Mammary epithelial cell (primary cell): ENCODE measurements at regions of chr22 and their contacts with region 1.

Region 1: DNA sequence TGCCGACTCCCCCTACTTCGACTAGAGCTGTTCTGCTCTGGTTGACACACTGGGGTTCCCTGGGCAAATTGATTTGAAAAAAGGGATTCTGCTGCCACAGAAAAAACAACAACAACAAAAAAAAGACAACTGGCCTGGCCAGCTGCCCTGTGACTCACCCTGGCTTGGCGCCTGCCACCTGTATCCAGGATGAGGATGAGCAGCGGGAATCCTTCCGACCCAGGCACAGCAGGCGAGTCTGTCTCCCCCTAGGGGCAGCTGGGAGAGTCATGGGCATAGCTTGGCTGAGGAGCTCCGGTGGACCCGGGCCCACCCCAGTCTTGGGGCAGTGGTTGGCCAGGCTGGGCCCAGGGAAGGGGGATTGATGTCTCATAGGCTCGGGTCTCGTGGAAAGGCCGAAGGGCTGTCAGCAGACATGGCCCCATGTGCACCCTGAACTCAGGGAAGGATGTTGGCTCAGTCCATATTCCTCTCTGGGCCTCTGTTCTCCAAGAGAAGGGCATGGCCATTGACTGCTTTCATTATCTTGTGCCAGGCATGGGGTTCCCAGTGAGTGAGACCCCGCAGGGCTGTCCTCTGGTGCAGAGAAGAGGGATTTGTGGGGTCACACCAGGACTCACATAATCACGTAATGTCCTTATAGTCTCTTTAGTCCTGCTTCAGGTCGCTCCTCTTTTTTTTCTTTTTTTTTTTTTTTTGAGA is 10.4 kb upstream of the SUN2 start:
- DNase-seq: peak; percentile 65
- H3K4me3 ChIP-seq: no peak overlapping the region
- H3K27ac ChIP-seq: no peak overlapping the region
- H3K4me1 ChIP-seq: peaks cover 13% of the 10 kb centered on the region
- H3K27me3 ChIP-seq: no peaks in the 10 kb centered on the region
- CTCF ChIP-seq: peak; percentile 96 to 98

Region 2: DNA sequence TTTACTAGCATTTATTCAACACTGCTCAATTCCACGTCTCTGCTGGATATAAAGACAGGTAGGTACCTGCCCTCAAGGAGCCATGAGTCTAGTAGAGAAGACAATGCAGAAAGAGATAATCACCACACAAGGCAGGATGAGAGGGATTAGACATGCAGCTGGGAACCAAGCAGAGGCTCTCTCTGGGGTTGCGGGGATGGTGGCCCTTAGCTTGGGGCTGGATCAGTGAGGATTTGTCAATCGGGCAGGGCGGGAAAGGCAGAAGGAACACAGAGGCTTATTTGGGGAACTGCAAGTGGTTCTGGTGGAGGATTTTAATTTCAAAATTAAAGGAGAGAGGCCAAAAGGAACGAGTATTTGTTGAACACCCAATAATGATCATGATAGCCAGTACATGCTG is 187.7 kb before region 1 on chr22:
- CTCF ChIA-PET with region 1: no interaction called
- dilution Hi-C with region 1: no loop called
- in situ Hi-C with region 1: no loop called
- intact Hi-C with region 1: no loop called
- DNase-seq: no peak
- H3K4me3 ChIP-seq: no peak overlapping the region
- H3K27ac ChIP-seq: no peak overlapping the region
- H3K4me1 ChIP-seq: no peaks in the 10 kb centered on the region
- H3K27me3 ChIP-seq: no peaks in the 10 kb centered on the region
- CTCF ChIP-seq: no peak

Region 3: GRCh38 chr22:38681784-38682335 is 84.4 kb before region 1 on chr22 and contains the start of gene TOMM22:
- CTCF ChIA-PET with region 1: interaction called, 7 read pairs
- dilution Hi-C with region 1: no loop called
- in situ Hi-C with region 1: no loop called
- intact Hi-C with region 1: loop called (anchors 1 kb)
- DNase-seq: peak; percentile 85
- H3K4me3 ChIP-seq: peak within 1 kb of the TSS; percentile 68 to 95 (median 93)
- H3K27ac ChIP-seq: peak within 1 kb of the TSS; percentile 88
- H3K4me1 ChIP-seq: peaks cover 8% of the 10 kb centered on the region
- H3K27me3 ChIP-seq: no peaks in the 10 kb centered on the region
- CTCF ChIP-seq: peak; percentile 36 to 76
- total RNA-seq, gene TOMM22: 56.5 to 76.7 TPM

Region 4: DNA sequence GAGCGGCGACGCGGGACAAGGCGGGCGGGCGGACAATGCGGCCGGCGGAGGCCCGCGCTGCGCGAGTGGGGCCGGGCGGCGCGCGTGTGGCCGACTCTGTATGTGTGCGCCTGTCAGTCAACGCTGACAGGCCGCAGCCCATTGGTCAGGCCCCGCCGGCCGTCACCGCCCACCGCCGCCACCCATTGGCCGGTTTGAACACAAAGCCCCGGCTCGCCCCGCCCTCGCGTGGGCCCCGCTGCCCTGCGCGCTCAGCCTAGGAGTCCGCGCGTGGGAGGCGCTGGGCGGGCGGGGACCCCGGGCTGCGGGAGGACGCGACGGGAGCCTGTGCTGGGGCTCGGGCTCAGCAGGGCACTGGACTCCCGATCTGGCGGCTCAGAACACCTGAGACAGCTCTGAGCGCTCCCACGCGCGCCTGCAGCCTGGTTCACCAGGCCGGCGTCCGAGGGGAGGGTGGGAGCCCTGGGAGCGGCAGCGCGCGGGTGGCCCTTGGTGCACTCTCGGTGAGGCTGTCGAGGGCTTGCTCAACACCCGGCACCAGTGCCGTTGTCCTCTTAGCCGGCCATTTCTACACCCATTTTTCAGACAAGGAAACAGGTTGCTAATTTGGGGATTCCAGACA is 10.2 kb before region 1 on chr22 and contains the start of gene SUN2:
- CTCF ChIA-PET with region 1: interaction called, 10 read pairs
- dilution Hi-C with region 1: no loop called
- in situ Hi-C with region 1: no loop called
- intact Hi-C with region 1: loop called (anchors 1 kb)
- DNase-seq: peak; percentile 74
- H3K4me3 ChIP-seq: peak within 1 kb of the TSS; percentile 45 to 70 (median 55)
- H3K27ac ChIP-seq: peak within 1 kb of the TSS; percentile 37
- H3K4me1 ChIP-seq: peaks cover 35% of the 10 kb centered on the region
- H3K27me3 ChIP-seq: no peaks in the 10 kb centered on the region
- CTCF ChIP-seq: no peak
- total RNA-seq, gene SUN2: 70.3 to 106 TPM

Region 5: DNA sequence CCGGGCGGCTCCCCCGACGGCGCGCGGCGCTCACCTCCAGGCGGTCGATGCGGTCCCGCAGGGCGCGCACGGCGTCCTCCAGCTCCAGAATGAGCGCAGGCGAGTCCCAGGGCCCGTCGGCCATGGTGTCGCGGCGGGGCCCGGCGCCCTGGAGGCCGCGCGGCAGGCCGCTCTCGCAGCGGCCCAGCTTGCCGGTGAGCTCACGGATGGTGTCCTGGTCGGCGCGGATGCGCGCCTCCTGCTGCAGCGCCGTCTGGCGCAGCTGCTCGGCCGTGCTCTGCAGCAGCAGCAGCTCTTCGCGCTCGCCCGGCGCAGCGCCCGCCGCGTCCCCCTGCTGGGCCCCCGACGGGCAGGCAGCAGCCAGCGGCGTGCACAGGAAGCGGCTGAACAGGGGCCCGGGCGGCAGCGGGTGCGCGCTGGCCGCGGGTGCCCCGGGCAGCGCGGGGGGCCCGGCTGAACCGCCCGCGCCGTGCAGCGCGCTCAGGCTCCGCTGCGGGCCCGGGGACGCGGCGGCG is 77.0 kb after region 1 on chr22:
- CTCF ChIA-PET with region 1: interaction called, 15 read pairs
- dilution Hi-C with region 1: no loop called
- in situ Hi-C with region 1: no loop called
- intact Hi-C with region 1: loop called (anchors 2 kb)
- DNase-seq: peak; percentile 56
- H3K4me3 ChIP-seq: peak overlapping the region in 2 of 3 experiments; percentile 17 to 40
- H3K27ac ChIP-seq: no peak overlapping the region
- H3K4me1 ChIP-seq: peaks cover 10% of the 10 kb centered on the region
- H3K27me3 ChIP-seq: peaks cover 12% of the 10 kb centered on the region
- CTCF ChIP-seq: peak; percentile 7 to 37

Region 6: DNA sequence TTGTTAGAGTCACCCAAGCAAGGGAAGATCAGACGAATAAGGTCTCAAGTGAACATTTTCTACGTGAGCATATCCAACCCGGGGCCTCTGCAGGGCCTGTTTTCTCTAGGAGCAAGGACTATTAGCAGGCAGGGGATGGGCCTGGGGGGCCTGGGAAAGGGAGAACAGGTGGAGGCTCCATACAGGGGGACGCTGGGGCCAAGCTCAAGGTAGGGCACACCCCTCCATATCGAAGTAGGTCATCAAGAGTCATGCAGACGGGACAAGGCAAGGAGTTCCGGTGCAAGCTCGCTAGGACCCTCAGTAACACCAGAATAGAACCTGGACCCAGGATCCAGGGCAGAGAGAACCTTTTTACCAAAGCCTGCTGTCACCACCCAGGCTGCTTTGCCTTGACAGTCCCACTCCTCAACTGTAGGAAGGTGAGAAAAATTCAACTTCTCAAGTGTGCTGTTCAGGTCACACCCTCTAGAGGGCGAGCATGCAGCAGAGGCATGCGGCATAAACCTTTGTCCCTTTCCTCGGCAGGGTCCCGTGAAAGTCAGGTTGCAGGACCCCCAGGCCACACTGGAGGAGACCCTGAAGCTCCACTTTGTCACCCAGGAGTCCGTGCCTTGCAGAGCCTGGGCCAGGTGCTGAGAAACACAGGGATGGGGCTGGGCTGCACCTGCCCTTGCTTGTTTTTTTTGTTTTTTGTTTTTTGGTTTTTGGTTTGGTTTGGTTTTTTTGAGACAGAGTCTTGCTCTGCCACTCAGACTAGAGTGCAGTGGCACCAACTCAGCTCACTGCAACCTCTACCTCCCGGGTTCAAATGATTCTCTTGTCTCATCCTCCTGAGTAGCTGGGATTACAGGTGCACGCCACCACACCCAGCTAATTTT is 207.3 kb after region 1 on chr22:
- CTCF ChIA-PET with region 1: no interaction called
- dilution Hi-C with region 1: no loop called
- in situ Hi-C with region 1: no loop called
- intact Hi-C with region 1: loop called (anchors 1 kb)
- DNase-seq: no peak
- H3K4me3 ChIP-seq: no peak overlapping the region
- H3K27ac ChIP-seq: no peak overlapping the region
- H3K4me1 ChIP-seq: no peaks in the 10 kb centered on the region
- H3K27me3 ChIP-seq: no peaks in the 10 kb centered on the region
- CTCF ChIP-seq: peak; percentile 89 to 98